ENCODE measurements at regions of chr5 and their contacts with region 1.

Region 1: DNA sequence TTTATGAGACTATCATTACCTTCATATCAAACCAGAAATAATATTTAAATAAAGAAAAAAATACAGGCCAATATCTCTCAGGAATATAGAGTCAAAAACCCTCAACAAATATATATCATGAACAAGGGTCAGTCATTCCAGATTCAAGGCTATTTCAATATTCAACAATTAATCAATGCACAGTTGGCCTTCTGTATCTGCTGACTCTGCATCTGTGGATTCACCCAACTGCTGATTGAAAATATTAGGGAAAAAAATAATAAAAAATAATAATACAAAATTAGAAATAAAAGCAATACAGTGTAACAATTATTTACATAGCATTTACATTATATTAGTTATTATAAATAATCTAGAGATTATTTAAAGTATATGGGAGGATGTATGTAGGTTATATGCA is 1114.0 kb downstream of the CDH12 start:
- DNase-seq: no peak
- H3K4me3 ChIP-seq: no peak overlapping the region
- H3K27ac ChIP-seq: no peak overlapping the region
- H3K4me1 ChIP-seq: no peaks in the 10 kb centered on the region
- H3K27me3 ChIP-seq: no peaks in the 10 kb centered on the region
- CTCF ChIP-seq: no peak
- POLR2A ChIP-seq: no peak

Region 2: GRCh38 chr5:21701317-21701716 is 37.8 kb before region 1 on chr5:
- intact Hi-C with region 1: loop called (anchors 5 kb)
- DNase-seq: no peak
- H3K4me3 ChIP-seq: no peak overlapping the region
- H3K27ac ChIP-seq: no peak overlapping the region
- H3K4me1 ChIP-seq: no peaks in the 10 kb centered on the region
- H3K27me3 ChIP-seq: no peaks in the 10 kb centered on the region
- CTCF ChIP-seq: no peak
- POLR2A ChIP-seq: no peak